ENCODE measurements at regions of chr13 and their contacts with region 1.

Region 1: GRCh38 chr13:113951246-113951999 is 22.5 kb downstream of the C13orf46 start:
- DNase-seq: peak; percentile 85
- ATAC-seq: peak; percentile 96
- H3K4me3 ChIP-seq: no peak overlapping the region
- H3K27ac ChIP-seq: no peak overlapping the region
- H3K4me1 ChIP-seq: no peaks in the 10 kb centered on the region
- H3K27me3 ChIP-seq: no peaks in the 10 kb centered on the region
- CTCF ChIP-seq: peak; percentile 81

Region 2: DNA sequence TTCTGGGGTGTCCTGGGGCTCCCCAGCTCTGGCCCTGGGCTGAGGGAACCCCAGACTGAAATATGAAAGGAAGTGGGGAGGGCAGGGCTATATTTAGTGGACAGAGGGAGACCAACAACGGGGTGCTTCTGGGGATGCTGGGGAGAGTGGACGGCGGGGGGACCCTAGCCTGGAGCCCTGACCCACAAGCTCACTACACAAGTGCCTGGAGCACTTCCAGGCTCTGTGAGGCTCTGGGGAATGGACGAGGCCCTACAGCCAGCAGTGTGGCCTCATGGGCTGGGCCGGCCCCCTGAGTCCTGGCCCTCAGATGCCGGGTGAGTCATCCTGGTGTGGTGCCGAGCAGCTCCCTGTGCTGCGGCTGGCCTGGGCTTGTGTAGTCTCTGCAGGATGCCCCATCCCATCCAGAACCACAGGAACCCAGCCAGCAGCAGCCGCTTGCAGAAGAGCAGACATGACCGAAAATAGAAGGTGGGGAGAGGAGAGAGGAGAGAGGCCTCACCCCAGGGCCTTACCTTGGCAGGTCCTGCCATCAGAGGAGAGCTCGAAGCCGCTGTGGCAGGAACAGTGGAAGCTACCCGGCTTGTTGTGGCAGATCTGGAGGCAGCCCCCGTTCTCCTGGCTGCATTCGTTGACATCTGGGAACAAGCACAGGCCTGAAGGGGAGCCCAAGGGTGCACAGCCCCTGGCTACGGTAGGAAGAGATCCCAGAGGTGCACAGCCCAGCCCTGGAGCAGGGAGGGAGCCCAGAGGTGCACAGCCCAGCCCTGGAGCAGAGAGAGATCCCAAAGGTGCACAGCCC is 113.7 kb before region 1 on chr13:
- CTCF ChIA-PET with region 1: no interaction called
- POLR2A ChIA-PET with region 1: no interaction called
- intact Hi-C with region 1: loop called (anchors 5 kb)
- DNase-seq: peak; percentile 84
- ATAC-seq: peak; percentile 92
- H3K4me3 ChIP-seq: peak overlapping the region; percentile 48
- H3K27ac ChIP-seq: peak overlapping the region; percentile 83
- H3K4me1 ChIP-seq: peaks cover 23% of the 10 kb centered on the region
- H3K27me3 ChIP-seq: no peaks in the 10 kb centered on the region
- CTCF ChIP-seq: no peak

Region 3: GRCh38 chr13:113970810-113971470 is 19.5 kb after region 1 on chr13:
- CTCF ChIA-PET with region 1: no interaction called
- POLR2A ChIA-PET with region 1: no interaction called
- intact Hi-C with region 1: no loop called
- DNase-seq: peak; percentile 90
- ATAC-seq: peak; percentile 94
- H3K4me3 ChIP-seq: peak overlapping the region; percentile 23; the same call in 1 of the 2 replicates
- H3K27ac ChIP-seq: peak overlapping the region; percentile 82
- H3K4me1 ChIP-seq: peaks cover 21% of the 10 kb centered on the region
- H3K27me3 ChIP-seq: no peaks in the 10 kb centered on the region
- CTCF ChIP-seq: no peak

Region 4: GRCh38 chr13:114015608-114016295 is 64.3 kb after region 1 on chr13:
- CTCF ChIA-PET with region 1: no interaction called
- POLR2A ChIA-PET with region 1: no interaction called
- intact Hi-C with region 1: loop called (anchors 1 kb)
- DNase-seq: peak; percentile 65
- ATAC-seq: peak; percentile 93
- H3K4me3 ChIP-seq: no peak overlapping the region
- H3K27ac ChIP-seq: peak overlapping the region; percentile 52
- H3K4me1 ChIP-seq: peaks cover 6% of the 10 kb centered on the region; the same call in 1 of the 2 replicates
- H3K27me3 ChIP-seq: no peaks in the 10 kb centered on the region
- CTCF ChIP-seq: no peak

Region 5: DNA sequence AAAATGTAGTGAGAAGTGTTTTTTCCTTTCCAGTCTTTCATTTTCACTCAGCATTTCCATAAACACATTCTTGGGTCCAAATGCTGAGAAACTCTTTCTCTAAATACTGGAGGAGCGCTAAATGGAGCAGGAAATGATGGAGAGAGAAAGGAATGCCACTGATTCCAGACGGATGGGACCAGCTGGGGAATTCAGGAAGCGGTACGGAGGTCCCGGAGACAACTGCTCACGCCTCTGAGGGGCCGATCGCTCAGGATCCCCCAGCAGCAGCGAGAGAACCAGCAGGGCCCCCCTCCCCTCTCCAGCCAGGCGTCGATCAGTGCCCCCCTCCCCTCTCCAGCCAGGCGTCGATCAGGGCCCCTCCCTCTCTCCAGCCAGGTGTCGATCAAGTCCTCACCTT is 167.8 kb after region 1 on chr13:
- CTCF ChIA-PET with region 1: no interaction called
- POLR2A ChIA-PET with region 1: no interaction called
- intact Hi-C with region 1: loop called (anchors 2 kb)
- DNase-seq: peak; percentile 68
- ATAC-seq: peak; percentile 66
- H3K4me3 ChIP-seq: peak overlapping the region; percentile 51
- H3K27ac ChIP-seq: peak overlapping the region; percentile 67
- H3K4me1 ChIP-seq: peaks cover 30% of the 10 kb centered on the region
- H3K27me3 ChIP-seq: no peaks in the 10 kb centered on the region
- CTCF ChIP-seq: no peak

Region 6: DNA sequence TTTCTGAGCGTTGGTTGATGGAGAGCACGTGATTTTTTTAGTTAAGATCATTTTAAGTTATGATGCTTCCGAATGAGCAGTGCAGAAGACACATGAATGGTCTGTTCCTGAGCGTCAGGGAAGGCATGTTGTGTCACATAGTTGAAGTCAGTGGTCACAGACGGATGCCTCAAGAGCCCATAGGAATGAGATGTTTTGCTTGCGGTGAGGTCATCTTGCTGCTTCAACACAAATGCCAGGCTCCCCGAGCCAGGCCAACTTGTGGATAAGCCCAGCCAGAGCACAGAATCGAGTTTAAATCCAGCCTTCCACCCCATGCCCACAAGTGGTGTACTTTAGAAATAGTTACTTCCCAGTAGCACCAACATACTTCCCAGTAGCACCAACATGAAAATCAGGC is 335.4 kb after region 1 on chr13:
- CTCF ChIA-PET with region 1: no interaction called
- POLR2A ChIA-PET with region 1: no interaction called
- intact Hi-C with region 1: no loop called
- DNase-seq: no peak
- ATAC-seq: no peak
- H3K4me3 ChIP-seq: no peak overlapping the region
- H3K27ac ChIP-seq: no peak overlapping the region
- H3K4me1 ChIP-seq: no peaks in the 10 kb centered on the region
- H3K27me3 ChIP-seq: no peaks in the 10 kb centered on the region
- CTCF ChIP-seq: no peak